ENCODE measurements at regions of chr16 and their contacts with region 1.

Region 1: DNA sequence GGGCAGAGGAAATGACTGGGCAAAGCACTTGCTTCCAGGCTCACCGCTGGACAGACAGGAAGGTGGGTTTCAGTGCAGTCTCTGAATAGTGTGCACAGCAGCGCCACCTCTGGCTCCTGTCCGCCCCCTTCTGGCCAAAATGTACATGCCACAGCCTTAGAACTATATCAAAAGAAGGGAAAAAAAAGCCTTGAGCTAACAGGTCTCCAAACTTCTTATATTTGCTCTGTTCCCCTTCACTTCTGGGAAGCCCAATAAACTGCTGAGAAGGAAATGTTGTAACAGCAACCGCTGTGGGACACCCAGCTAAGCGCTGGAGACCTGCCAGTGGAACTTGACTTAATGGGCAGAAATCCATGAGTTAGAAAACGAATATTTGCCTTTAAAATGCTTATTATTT is 17.5 kb downstream of the COG7 start:
- DNase-seq: peak; percentile 67
- H3K4me3 ChIP-seq: no peak overlapping the region; a peak in 1 of 4 replicates
- H3K27ac ChIP-seq: no peak overlapping the region
- H3K4me1 ChIP-seq: no peaks in the 10 kb centered on the region
- H3K27me3 ChIP-seq: no peaks in the 10 kb centered on the region
- CTCF ChIP-seq: peak; percentile 90
- EP300 ChIP-seq: no peak
- RAD21 ChIP-seq: peak; percentile 66

Region 2: GRCh38 chr16:22948058-22948602 is 487.4 kb before region 1 on chr16:
- CTCF ChIA-PET with region 1: no interaction called
- POLR2A ChIA-PET with region 1: no interaction called
- DNase-seq: no peak
- H3K4me3 ChIP-seq: no peak overlapping the region
- H3K27ac ChIP-seq: no peak overlapping the region
- H3K4me1 ChIP-seq: no peaks in the 10 kb centered on the region
- H3K27me3 ChIP-seq: no peaks in the 10 kb centered on the region
- CTCF ChIP-seq: no peak
- EP300 ChIP-seq: no peak
- RAD21 ChIP-seq: no peak

Region 3: GRCh38 chr16:23152386-23153178 is 282.9 kb before region 1 on chr16:
- CTCF ChIA-PET with region 1: interaction called, 19 read pairs
- POLR2A ChIA-PET with region 1: interaction called, 3 read pairs
- DNase-seq: no peak
- H3K4me3 ChIP-seq: no peak overlapping the region
- H3K27ac ChIP-seq: no peak overlapping the region
- H3K4me1 ChIP-seq: peaks cover 0 to 5% of the 10 kb centered on the region in 2 experiments; a peak in 2 of 4 replicates
- H3K27me3 ChIP-seq: no peaks in the 10 kb centered on the region
- CTCF ChIP-seq: no peak
- EP300 ChIP-seq: no peak
- RAD21 ChIP-seq: no peak

Region 4: DNA sequence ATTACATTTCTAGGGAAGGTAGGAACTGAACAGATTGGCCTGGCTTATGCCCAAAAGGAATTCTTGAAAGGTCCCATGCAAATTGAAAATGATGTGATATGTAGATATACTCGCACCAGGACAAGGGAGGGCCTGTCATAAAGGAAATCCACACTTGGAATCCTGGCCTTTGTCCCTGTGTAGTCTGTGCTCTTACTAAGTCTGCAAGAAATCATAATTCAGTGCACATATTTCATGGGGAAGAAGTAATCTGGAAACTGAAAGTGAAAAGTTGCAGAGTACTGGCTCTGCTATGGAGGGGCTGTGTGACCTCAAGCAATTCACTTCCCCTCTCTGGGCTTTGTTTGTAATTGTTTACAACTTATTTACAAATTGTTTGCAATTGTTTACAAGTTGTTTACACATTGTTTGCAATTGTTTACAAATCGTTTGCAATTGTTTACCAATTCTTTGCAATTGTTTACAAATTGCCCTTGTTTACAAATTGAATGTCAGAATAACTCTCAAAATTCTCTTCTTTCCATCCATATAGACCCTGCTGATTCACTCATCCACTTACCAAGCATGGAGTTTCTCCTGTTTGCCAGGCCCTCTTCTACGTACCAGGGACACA is 240.0 kb before region 1 on chr16:
- CTCF ChIA-PET with region 1: interaction called, 19 read pairs
- POLR2A ChIA-PET with region 1: no interaction called
- DNase-seq: no peak
- H3K4me3 ChIP-seq: no peak overlapping the region
- H3K27ac ChIP-seq: no peak overlapping the region
- H3K4me1 ChIP-seq: no peaks in the 10 kb centered on the region
- H3K27me3 ChIP-seq: no peaks in the 10 kb centered on the region; the same call in 1 of the 2 replicates
- CTCF ChIP-seq: no peak
- EP300 ChIP-seq: no peak
- RAD21 ChIP-seq: no peak

Region 5: GRCh38 chr16:23232806-23233205 is 202.7 kb before region 1 on chr16:
- CTCF ChIA-PET with region 1: no interaction called
- POLR2A ChIA-PET with region 1: no interaction called
- DNase-seq: no peak
- H3K4me3 ChIP-seq: no peak overlapping the region
- H3K27ac ChIP-seq: no peak overlapping the region
- H3K4me1 ChIP-seq: no peaks in the 10 kb centered on the region
- H3K27me3 ChIP-seq: no peaks in the 10 kb centered on the region
- CTCF ChIP-seq: no peak
- EP300 ChIP-seq: no peak
- RAD21 ChIP-seq: no peak

Region 6: DNA sequence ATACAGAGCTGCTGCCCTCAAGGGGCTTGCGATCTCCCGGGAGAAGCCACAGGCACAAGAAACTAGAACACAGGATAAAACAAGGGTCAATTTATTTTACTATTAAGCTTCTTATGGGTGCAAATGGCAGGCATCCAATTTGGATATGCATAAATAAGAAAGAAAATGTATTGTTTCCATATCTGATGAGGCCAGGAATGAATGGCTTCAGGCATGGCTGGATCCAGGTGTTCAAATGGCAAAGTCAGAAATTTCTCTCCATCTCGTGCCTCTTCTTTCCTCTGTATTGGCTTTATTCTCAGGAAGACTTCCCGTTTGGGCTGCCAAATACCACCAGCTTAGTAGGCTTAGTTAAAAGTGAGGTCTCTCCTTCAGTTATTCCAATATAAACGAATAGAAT is 90.3 kb before region 1 on chr16:
- CTCF ChIA-PET with region 1: interaction called, 18 read pairs
- POLR2A ChIA-PET with region 1: no interaction called
- DNase-seq: no peak
- H3K4me3 ChIP-seq: no peak overlapping the region
- H3K27ac ChIP-seq: no peak overlapping the region
- H3K4me1 ChIP-seq: no peaks in the 10 kb centered on the region
- H3K27me3 ChIP-seq: no peaks in the 10 kb centered on the region
- CTCF ChIP-seq: no peak
- EP300 ChIP-seq: no peak
- RAD21 ChIP-seq: no peak

Region 7: GRCh38 chr16:23416816-23417215 is 18.7 kb before region 1 on chr16:
- CTCF ChIA-PET with region 1: interaction called, 53 read pairs
- POLR2A ChIA-PET with region 1: no interaction called
- DNase-seq: peak; percentile 45
- H3K4me3 ChIP-seq: no peak overlapping the region
- H3K27ac ChIP-seq: peak overlapping the region in 1 of 2 experiments; percentile 50; a peak in 2 of 4 replicates
- H3K4me1 ChIP-seq: peaks cover 0 to 3% of the 10 kb centered on the region in 2 experiments; a peak in 1 of 4 replicates
- H3K27me3 ChIP-seq: no peaks in the 10 kb centered on the region
- CTCF ChIP-seq: no peak
- EP300 ChIP-seq: no peak
- RAD21 ChIP-seq: no peak

Region 8: GRCh38 chr16:23556881-23557778 is 121.6 kb after region 1 on chr16 and contains the starts of genes EARS2 and UBFD1:
- CTCF ChIA-PET with region 1: no interaction called
- POLR2A ChIA-PET with region 1: no interaction called
- DNase-seq: peak; percentile 96
- H3K4me3 ChIP-seq: peak within 1 kb of the TSS; percentile 89 to 98
- H3K27ac ChIP-seq: peak within 1 kb of the TSS; percentile 87 to 93
- H3K4me1 ChIP-seq: peaks cover 12 to 17% of the 10 kb centered on the region in 2 experiments
- H3K27me3 ChIP-seq: no peaks in the 10 kb centered on the region
- CTCF ChIP-seq: peak; percentile 88
- EP300 ChIP-seq: peak; percentile 6 to 28; a peak in 2 of 4 replicates
- RAD21 ChIP-seq: peak; percentile 28; the same call in 1 of the 2 replicates
- polyA plus RNA-seq, gene EARS2: 23.2 and 37.4 TPM in 2 replicates
- polyA plus RNA-seq, gene UBFD1: 66.1 and 68.9 TPM in 2 replicates